ENCODE measurements at regions of chr1 and their contacts with region 1.

Region 1: GRCh38 chr1:44985747-44986359 is 542 bp downstream of the EIF2B3 start:
- DNase-seq: no peak
- ATAC-seq: no peak
- H3K4me3 Mint-ChIP-seq: peak overlapping the region; percentile 96
- H3K27ac Mint-ChIP-seq: peak overlapping the region; percentile 87
- H3K4me1 Mint-ChIP-seq: peaks cover 22% of the 10 kb centered on the region
- H3K27me3 Mint-ChIP-seq: no peaks in the 10 kb centered on the region

Region 2: DNA sequence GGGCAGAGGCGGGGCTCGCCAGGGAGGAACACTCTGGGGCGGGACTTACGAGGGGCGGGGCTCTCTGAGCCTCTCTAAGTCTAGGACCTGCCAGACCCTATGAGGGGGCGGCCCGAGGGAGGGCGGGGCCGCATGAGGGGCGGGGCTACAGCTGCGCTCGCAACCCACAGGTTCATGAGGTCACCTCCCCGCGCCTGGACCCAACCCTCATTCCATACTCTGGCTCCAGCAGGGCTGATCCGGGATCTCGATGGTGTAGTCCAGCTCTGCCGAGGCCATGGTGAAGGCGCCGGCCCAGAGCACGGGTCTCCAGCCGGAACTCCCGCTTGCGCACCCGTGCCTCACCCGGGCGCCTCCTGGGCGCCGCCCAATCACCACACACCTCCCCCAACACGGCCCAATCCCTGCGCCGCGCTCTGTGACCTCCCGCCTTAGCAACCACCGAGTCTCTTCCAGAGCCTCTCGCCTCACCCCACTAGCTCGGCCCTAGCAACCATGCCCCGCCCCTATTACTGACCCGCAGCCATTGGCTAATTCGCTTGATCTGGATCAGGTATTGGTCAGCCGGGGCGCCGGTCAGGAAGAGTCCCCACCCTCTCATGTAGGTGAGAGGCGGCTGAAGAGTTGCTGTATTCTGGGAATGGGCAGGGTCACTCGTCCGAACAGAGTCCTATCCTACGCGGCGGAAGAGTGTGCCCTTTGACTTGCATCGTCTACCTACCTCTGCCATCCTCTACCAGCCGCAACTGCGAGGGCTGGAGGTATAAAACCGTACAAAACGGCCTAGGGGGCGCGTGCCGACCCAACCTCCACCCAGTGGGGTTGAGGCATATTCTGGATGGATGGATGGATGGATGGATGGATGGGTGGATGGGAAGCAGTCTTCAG is 311.5 kb before region 1 on chr1 and contains the starts of genes ARMH1 and TMEM53:
- CTCF ChIA-PET with region 1: no interaction called
- POLR2A ChIA-PET with region 1: no interaction called
- intact Hi-C with region 1: loop called in 1 of 2 experiments (anchors 1 kb)
- DNase-seq: peak; percentile 99
- ATAC-seq: peak; percentile 97
- H3K4me3 Mint-ChIP-seq: peak within 1 kb of the TSS; percentile 78
- H3K27ac Mint-ChIP-seq: peak within 1 kb of the TSS; percentile 84
- H3K4me1 Mint-ChIP-seq: peaks cover 24% of the 10 kb centered on the region
- H3K27me3 Mint-ChIP-seq: no peaks in the 10 kb centered on the region
- total RNA-seq, gene ARMH1: 67.3 to 75.1 TPM
- total RNA-seq, gene TMEM53: 4.3 to 5.5 TPM

Region 3: GRCh38 chr1:44739361-44740178 is 246.3 kb before region 1 on chr1 and contains the start of gene KIF2C:
- CTCF ChIA-PET with region 1: no interaction called
- POLR2A ChIA-PET with region 1: no interaction called
- intact Hi-C with region 1: loop called in 1 of 2 experiments (anchors 1 kb)
- DNase-seq: peak; percentile 99
- ATAC-seq: peak; percentile 98
- H3K4me3 Mint-ChIP-seq: peak within 1 kb of the TSS; percentile 98
- H3K27ac Mint-ChIP-seq: peak within 1 kb of the TSS; percentile 94
- H3K4me1 Mint-ChIP-seq: peaks cover 26% of the 10 kb centered on the region
- H3K27me3 Mint-ChIP-seq: no peaks in the 10 kb centered on the region
- total RNA-seq, gene KIF2C: 101 to 119 TPM

Region 4: GRCh38 chr1:44799770-44800584 is 185.9 kb before region 1 on chr1 and contains the start of gene PLK3:
- CTCF ChIA-PET with region 1: interaction called, 8 read pairs
- POLR2A ChIA-PET with region 1: interaction called, 4 read pairs
- intact Hi-C with region 1: loop called in 1 of 2 experiments (anchors 2 kb)
- DNase-seq: peak; percentile 99
- ATAC-seq: peak; percentile 84
- H3K4me3 Mint-ChIP-seq: peak within 1 kb of the TSS; percentile 87
- H3K27ac Mint-ChIP-seq: peak within 1 kb of the TSS; percentile 100
- H3K4me1 Mint-ChIP-seq: peaks cover 41% of the 10 kb centered on the region
- H3K27me3 Mint-ChIP-seq: no peaks in the 10 kb centered on the region
- total RNA-seq, gene PLK3: 52.1 to 52.7 TPM

Region 5: GRCh38 chr1:45470306-45470798 is 484.5 kb after region 1 on chr1:
- CTCF ChIA-PET with region 1: no interaction called
- POLR2A ChIA-PET with region 1: interaction called, 11 read pairs
- intact Hi-C with region 1: no loop called
- DNase-seq: no peak
- ATAC-seq: no peak
- H3K4me3 Mint-ChIP-seq: no peak overlapping the region
- H3K27ac Mint-ChIP-seq: no peak overlapping the region
- H3K4me1 Mint-ChIP-seq: no peaks in the 10 kb centered on the region
- H3K27me3 Mint-ChIP-seq: no peaks in the 10 kb centered on the region

Region 6: GRCh38 chr1:45550401-45551351 is 564.8 kb after region 1 on chr1 and contains the start of gene AKR1A1:
- CTCF ChIA-PET with region 1: no interaction called
- POLR2A ChIA-PET with region 1: no interaction called
- intact Hi-C with region 1: loop called in 1 of 2 experiments (anchors 1 kb)
- DNase-seq: peak; percentile 95
- ATAC-seq: peak; percentile 94
- H3K4me3 Mint-ChIP-seq: peak within 1 kb of the TSS; percentile 94
- H3K27ac Mint-ChIP-seq: peak within 1 kb of the TSS; percentile 94
- H3K4me1 Mint-ChIP-seq: peaks cover 16% of the 10 kb centered on the region
- H3K27me3 Mint-ChIP-seq: no peaks in the 10 kb centered on the region
- total RNA-seq, gene AKR1A1: 140 to 181 TPM

Measured in activated CD4-positive, alpha-beta T cell treated with anti-CD3 and anti-CD28 coated beads for 36 hours (primary cell).